Common myeloid progenitor, CD34-positive (primary cell): ENCODE measurements at regions of chr12 and their contacts with region 1.

Region 1: DNA sequence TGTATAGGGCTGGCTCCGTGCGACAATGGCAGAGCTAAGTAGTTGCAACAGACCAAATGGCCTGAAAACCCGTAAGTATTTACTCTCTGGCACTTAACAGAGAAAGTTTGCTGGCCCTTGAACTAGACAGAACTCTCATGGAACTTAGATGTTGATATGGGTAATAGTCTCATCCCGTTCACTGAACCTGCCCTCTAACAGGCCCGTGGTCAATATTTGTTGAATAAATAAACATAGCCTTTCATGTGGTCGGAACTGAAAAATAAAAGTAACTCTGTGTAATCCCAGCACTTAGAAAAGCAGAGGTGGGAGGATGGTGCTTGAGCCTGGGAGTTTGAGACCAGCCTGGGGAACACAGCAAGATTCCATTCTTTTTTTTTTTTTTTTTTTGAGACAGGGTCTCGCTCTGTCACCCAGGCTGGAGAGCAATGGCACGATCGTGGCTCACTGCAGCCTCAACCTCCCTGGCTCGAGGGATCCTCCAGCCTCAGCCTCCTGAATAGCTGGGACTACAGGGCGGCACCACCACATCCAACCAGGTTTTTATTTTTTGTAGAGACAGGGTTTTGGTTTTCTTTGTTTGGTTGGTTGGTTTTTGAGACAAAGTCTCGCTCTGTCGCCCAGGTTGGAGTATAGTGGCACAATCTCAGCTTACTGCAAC is 29.7 kb downstream of the KDM2B start:
- DNase-seq: no peak
- H3K4me3 ChIP-seq: no peak overlapping the region
- H3K27ac ChIP-seq: no peak overlapping the region
- H3K4me1 ChIP-seq: peaks cover 0 to 13% (median 8%) of the 10 kb centered on the region in 4 experiments
- H3K27me3 ChIP-seq: no peaks in the 10 kb centered on the region

Region 2: DNA sequence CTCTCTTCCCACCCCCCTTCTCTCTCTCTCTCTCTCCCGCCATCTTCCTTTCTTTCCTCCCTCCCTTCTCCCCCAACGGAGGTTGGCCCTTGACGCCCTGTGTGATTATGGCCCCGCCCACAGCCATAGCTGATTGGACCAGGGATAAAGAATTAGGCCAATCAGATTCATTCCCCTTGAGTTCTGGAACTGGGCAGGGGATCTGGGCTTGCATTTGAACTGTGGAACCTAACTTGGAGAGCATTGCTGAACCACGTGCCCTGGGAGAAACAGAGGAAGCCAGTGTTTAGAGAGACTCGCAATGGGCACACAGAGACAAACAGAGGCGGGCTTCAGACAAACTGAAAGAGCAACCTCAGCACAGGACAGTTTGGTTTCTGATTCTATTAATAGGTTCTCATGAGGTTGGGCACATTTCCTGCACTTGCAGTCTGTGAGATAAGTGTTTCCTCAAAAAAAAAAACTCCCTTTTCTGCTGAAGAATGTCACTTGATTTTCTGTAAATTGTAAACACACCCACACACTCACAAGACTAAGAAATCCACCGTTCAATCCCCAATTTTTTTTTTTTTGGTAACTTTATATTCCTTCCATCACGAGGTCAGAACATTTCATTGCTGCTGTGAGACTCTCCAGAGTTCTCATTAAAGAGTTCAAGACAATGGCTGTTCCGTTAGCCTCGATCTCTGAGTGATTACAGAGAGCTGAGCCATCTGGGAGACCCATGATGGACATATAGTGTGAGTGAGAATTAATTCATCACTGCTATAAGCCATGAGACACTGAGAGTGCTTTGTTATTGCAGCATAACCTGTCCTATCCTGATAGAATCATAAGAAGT is 421.9 kb before region 1 on chr12:
- CTCF ChIA-PET with region 1: no interaction called
- POLR2A ChIA-PET with region 1: no interaction called
- DNase-seq: peak; percentile 91 to 98 (median 97)
- H3K4me3 ChIP-seq: peak overlapping the region in 6 of 7 experiments; percentile 13 to 73 (median 53)
- H3K27ac ChIP-seq: peak overlapping the region; percentile 17 to 73
- H3K4me1 ChIP-seq: peaks cover 17 to 78% (median 70%) of the 10 kb centered on the region in 4 experiments
- H3K27me3 ChIP-seq: no peaks in the 10 kb centered on the region

Region 3: GRCh38 chr12:121509339-121509738 is 41.8 kb before region 1 on chr12:
- CTCF ChIA-PET with region 1: no interaction called
- POLR2A ChIA-PET with region 1: no interaction called
- DNase-seq: no peak
- H3K4me3 ChIP-seq: no peak overlapping the region
- H3K27ac ChIP-seq: no peak overlapping the region
- H3K4me1 ChIP-seq: peaks cover 0 to 5% (median 2%) of the 10 kb centered on the region in 4 experiments
- H3K27me3 ChIP-seq: no peaks in the 10 kb centered on the region

Region 4: DNA sequence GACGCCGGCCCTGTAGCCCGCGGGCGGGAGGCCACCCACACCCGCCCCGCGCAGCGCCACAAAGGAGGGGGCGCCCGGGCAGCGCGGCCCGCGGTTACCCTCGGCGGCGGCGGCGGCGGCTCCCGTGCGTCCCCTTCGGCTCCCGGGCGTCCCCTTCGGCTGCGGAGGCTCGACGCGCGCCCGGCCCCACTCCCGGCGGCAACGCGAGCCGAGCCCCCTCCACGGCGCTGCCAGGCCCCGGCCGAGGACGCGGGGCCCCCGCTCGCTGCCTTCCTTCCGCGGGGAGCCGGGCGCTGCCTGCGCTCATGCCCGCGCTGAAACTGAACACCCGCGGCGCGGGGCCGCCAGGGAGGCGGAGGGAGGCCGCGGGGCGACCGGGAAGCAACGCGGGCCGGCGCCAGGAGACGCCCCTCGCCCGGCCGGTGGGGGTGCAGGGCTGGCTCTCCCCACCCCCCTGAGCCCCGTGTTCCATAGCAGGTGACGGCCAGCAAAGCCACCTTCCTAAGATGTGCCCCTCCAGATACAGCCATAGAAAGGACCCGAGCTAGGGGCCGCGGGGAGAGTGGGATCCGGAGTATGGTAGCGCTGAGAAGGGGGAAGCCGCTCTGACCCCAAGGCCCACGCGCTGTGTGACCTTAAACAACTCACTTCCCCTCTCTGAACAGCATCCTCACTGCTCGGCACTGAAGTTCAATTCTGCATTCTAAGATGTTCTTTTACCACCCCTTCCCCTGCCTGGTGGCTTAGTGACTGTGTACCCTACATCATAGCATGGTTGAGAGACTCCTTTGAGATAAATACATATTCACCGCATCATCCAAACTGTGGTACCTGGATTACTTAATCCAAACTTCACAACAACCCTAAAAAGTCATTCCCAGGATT is 13.0 kb before region 1 on chr12:
- CTCF ChIA-PET with region 1: interaction called, 17 read pairs
- POLR2A ChIA-PET with region 1: interaction called, 5 read pairs
- DNase-seq: peak in 2 of 3 donors; percentile 18 to 54
- H3K4me3 ChIP-seq: peak overlapping the region; percentile 30 to 79 (median 67)
- H3K27ac ChIP-seq: peak overlapping the region in 1 of 2 experiments; percentile 25
- H3K4me1 ChIP-seq: peaks cover 0 to 39% (median 30%) of the 10 kb centered on the region in 4 experiments
- H3K27me3 ChIP-seq: no peaks in the 10 kb centered on the region

Region 5: GRCh38 chr12:121576851-121577391 is 25.8 kb after region 1 on chr12:
- CTCF ChIA-PET with region 1: interaction called, 15 read pairs
- POLR2A ChIA-PET with region 1: no interaction called
- DNase-seq: no peak
- H3K4me3 ChIP-seq: peak overlapping the region in 1 of 7 experiments; percentile 4
- H3K27ac ChIP-seq: peak overlapping the region in 1 of 2 experiments; percentile 4
- H3K4me1 ChIP-seq: peaks cover 6 to 43% (median 36%) of the 10 kb centered on the region in 4 experiments
- H3K27me3 ChIP-seq: no peaks in the 10 kb centered on the region

Region 6: GRCh38 chr12:121678716-121679580 is 127.8 kb after region 1 on chr12:
- CTCF ChIA-PET with region 1: interaction called, 103 read pairs
- POLR2A ChIA-PET with region 1: interaction called, 3 read pairs
- DNase-seq: peak in 1 of 3 donors; percentile 37
- H3K4me3 ChIP-seq: no peak overlapping the region
- H3K27ac ChIP-seq: no peak overlapping the region
- H3K4me1 ChIP-seq: peaks cover 0 to 6% (median 4%) of the 10 kb centered on the region in 4 experiments
- H3K27me3 ChIP-seq: no peaks in the 10 kb centered on the region

Region 7: DNA sequence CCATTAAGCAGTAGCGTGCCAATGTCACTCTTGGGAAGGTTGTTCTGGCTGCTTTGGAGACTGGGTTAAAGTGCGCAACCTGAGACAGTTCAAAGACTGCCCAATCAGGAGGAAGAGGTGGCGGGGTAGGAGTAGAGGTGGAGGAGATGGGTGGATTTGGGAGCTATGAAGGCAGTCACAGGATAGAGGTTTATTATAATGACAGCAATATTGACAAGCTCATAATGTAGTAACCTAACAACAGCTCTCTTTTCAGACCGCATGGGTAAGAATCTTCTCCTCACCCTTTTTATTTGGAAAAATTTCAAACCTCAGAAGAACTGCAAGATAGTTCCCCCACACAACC is 332.2 kb after region 1 on chr12:
- CTCF ChIA-PET with region 1: no interaction called
- POLR2A ChIA-PET with region 1: no interaction called
- DNase-seq: no peak
- H3K4me3 ChIP-seq: no peak overlapping the region
- H3K27ac ChIP-seq: no peak overlapping the region
- H3K4me1 ChIP-seq: peaks cover 0 to 6% (median 2%) of the 10 kb centered on the region in 4 experiments
- H3K27me3 ChIP-seq: peaks cover 0 to 2% (median 0%) of the 10 kb centered on the region in 5 experiments